ENCODE measurements at regions of chr4 and their contacts with region 1.

Region 1: GRCh38 chr4:158253350-158253980 is 43.2 kb downstream of the TMEM144 start:
- DNase-seq: peak; percentile 45
- ATAC-seq: peak; percentile 24
- H3K4me3 ChIP-seq: no peak overlapping the region
- H3K4me3 Mint-ChIP-seq: no peak overlapping the region
- H3K27ac ChIP-seq: no peak overlapping the region
- H3K27ac Mint-ChIP-seq: no peak overlapping the region
- H3K4me1 ChIP-seq: no peaks in the 10 kb centered on the region
- H3K4me1 Mint-ChIP-seq: peaks cover 5% of the 10 kb centered on the region
- H3K27me3 ChIP-seq: peaks cover 0 to 5% (median 0%) of the 10 kb centered on the region in 4 experiments
- H3K27me3 Mint-ChIP-seq: peaks cover 10% of the 10 kb centered on the region
- CTCF ChIP-seq: peak; percentile 75

Region 2: DNA sequence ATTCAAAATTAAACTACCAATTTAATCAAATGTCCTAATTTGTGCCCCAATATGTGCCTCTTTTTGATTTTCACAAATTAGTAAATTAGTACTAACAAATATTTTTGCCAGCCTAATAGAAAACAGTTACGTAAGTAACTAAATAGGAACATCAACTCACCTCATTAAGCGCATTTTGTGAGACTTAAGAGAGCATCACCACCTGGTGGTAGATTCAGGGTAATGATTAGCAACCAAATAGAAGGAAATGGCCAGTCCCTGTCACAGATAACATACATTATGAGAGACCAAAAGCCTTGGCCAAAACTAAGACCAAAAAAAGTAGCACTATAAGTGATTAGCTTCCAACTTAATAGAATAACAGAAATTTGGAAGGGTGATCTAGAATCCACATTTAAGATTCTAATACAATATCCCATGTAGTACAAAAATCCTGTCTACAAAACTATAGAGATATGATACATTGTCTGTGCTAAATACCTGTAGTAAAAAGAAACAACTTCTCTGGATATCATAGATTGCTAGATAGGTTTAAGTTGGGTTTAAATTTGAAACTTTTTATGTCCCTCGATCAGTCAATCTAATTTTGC is 371.5 kb after region 1 on chr4:
- CTCF ChIA-PET with region 1: interaction called, 3 read pairs
- POLR2A ChIA-PET with region 1: no interaction called
- intact Hi-C with region 1: loop called (anchors 1 kb)
- DNase-seq: peak; percentile 39
- ATAC-seq: no peak
- H3K4me3 ChIP-seq: no peak overlapping the region
- H3K4me3 Mint-ChIP-seq: no peak overlapping the region
- H3K27ac ChIP-seq: no peak overlapping the region
- H3K27ac Mint-ChIP-seq: no peak overlapping the region
- H3K4me1 ChIP-seq: no peaks in the 10 kb centered on the region
- H3K4me1 Mint-ChIP-seq: no peaks in the 10 kb centered on the region
- H3K27me3 ChIP-seq: no peaks in the 10 kb centered on the region
- H3K27me3 Mint-ChIP-seq: peaks cover 6% of the 10 kb centered on the region
- CTCF ChIP-seq: peak; percentile 79

Region 3: GRCh38 chr4:159446266-159446976 is 1193.0 kb after region 1 on chr4:
- CTCF ChIA-PET with region 1: no interaction called
- POLR2A ChIA-PET with region 1: no interaction called
- intact Hi-C with region 1: loop called (anchors 5 kb)
- DNase-seq: peak; percentile 34
- ATAC-seq: peak; percentile 31
- H3K4me3 ChIP-seq: no peak overlapping the region
- H3K4me3 Mint-ChIP-seq: no peak overlapping the region
- H3K27ac ChIP-seq: no peak overlapping the region
- H3K27ac Mint-ChIP-seq: peak overlapping the region; percentile 53
- H3K4me1 ChIP-seq: no peaks in the 10 kb centered on the region
- H3K4me1 Mint-ChIP-seq: no peaks in the 10 kb centered on the region
- H3K27me3 ChIP-seq: no peaks in the 10 kb centered on the region
- H3K27me3 Mint-ChIP-seq: peaks cover 19% of the 10 kb centered on the region
- CTCF ChIP-seq: peak; percentile 69